PC-9 (cell line): ENCODE measurements at regions of chr17 and their contacts with region 1.

Region 1: DNA sequence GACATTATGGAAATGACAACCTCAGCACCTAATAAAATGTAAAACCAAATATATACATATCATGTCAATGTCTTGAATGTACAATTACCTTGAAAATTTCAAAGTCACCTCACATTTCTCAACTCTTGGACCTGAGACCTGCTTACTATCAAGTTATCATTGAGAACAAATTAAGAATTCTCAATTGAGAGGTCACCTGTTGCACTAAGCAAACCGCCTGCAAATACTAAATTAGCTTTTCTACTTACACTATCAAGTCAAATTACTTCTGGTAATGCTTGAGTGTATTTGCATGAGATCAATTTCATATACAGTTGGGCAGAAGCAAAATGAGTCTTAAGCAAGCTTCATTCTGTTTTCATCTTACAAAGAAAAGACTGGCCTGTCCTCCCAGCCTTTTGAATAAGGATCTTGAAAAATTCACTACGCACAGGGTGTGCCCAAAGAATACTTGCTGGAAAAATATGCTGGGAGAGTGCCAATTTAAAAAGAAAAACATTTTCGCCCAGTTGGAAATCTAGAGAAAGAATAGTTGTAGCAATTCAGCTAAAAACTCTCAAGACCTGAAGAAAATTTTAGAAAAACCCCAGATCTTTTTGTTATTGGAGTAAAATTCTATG is 35.7 kb downstream of the KANSL1 start:
- DNase-seq: no peak
- H3K4me3 ChIP-seq: no peak overlapping the region
- H3K27ac ChIP-seq: no peak overlapping the region
- H3K4me1 ChIP-seq: no peaks in the 10 kb centered on the region; the same call in 1 of the 2 replicates
- H3K27me3 ChIP-seq: no peaks in the 10 kb centered on the region
- CTCF ChIP-seq: no peak

Region 2: DNA sequence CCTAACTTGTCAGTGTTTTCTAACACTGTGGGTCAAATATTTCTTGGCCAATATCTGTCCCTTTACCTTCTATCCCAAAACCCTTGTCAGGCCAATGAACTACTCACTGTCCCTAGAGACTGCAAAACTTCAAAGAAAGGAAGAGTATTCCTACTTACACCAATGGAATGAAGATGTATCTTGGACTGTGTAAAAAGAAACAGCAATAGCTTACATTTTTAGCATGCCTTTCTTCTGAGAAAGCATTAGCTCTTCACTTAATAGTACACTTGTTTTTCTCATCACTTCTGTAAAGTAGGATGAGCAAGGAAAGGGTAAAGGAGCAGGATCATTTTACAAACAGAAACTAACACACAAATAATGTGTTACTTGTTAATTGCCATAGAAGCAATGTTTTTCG is 84.6 kb before region 1 on chr17:
- CTCF ChIA-PET with region 1: no interaction called
- POLR2A ChIA-PET with region 1: interaction called, 12 read pairs
- intact Hi-C with region 1: no loop called
- DNase-seq: peak in 1 of 2 experiments; percentile 43
- H3K4me3 ChIP-seq: no peak overlapping the region
- H3K27ac ChIP-seq: peak overlapping the region; percentile 8; the same call in 1 of the 2 replicates
- H3K4me1 ChIP-seq: no peaks in the 10 kb centered on the region; the same call in 1 of the 2 replicates
- H3K27me3 ChIP-seq: no peaks in the 10 kb centered on the region
- CTCF ChIP-seq: no peak

Region 3: DNA sequence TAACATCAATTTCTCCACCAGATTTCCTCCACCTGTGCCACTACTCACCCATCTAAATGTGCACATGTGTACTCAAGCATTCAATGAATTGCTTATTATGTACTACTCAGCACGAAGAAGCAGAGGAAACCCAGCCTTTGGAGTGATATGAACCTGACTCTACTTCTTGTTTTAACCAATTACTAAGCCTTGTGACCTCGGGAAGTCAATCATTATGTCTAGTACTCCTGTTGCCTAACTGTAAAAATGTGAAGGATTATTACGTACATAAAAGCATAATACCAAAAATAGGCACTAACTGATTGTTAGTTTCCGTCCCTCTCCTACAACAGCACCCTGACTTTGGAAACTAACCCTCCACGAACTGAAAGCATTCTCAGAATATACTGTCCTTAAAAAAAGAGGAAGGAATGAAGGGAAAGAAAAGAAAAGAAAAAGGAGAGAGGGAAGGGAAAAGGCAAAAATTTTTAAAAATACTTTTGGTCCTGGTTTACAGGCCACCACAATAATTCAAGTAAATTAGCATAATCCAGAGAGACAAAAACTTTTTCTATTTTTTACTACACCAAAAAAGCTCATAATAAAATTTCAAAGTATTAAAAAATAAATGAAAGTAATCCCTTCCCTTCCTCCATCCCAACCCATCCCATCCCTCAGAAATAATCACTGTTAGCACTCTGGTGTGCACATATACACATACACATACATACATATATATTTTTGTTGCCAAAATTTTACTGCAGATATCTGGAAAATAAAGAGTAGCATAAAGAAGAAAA is 17.9 kb before region 1 on chr17:
- CTCF ChIA-PET with region 1: no interaction called
- POLR2A ChIA-PET with region 1: no interaction called
- intact Hi-C with region 1: no loop called
- DNase-seq: no peak
- H3K4me3 ChIP-seq: no peak overlapping the region
- H3K27ac ChIP-seq: no peak overlapping the region; the same call in 1 of the 2 replicates
- H3K4me1 ChIP-seq: 0 out of 2 replicates have a peak, but pooled peaks cover 4% of the 10 kb centered on the region
- H3K27me3 ChIP-seq: no peaks in the 10 kb centered on the region
- CTCF ChIP-seq: no peak

Region 4: GRCh38 chr17:46199379-46199778 is 41.8 kb after region 1 on chr17:
- CTCF ChIA-PET with region 1: no interaction called
- POLR2A ChIA-PET with region 1: interaction called, 10 read pairs
- intact Hi-C with region 1: no loop called
- DNase-seq: no peak
- H3K4me3 ChIP-seq: no peak overlapping the region
- H3K27ac ChIP-seq: no peak overlapping the region
- H3K4me1 ChIP-seq: peaks cover 7% of the 10 kb centered on the region
- H3K27me3 ChIP-seq: no peaks in the 10 kb centered on the region
- CTCF ChIP-seq: no peak